ENCODE measurements at regions of chr5 and their contacts with region 1.

Region 1: GRCh38 chr5:177327539-177328522 is 16.1 kb upstream of the MXD3 start:
- DNase-seq: peak; percentile 68
- ATAC-seq: peak; percentile 78
- H3K4me3 ChIP-seq: no peak overlapping the region; a peak in 2 of 6 replicates
- H3K27ac ChIP-seq: peak overlapping the region; percentile 83
- H3K4me1 ChIP-seq: peaks cover 60% of the 10 kb centered on the region
- H3K27me3 ChIP-seq: no peaks in the 10 kb centered on the region
- CTCF ChIP-seq: peak; percentile 29; the same call in 1 of the 2 replicates
- EP300 ChIP-seq: no peak
- POLR2A ChIP-seq: no peak
- RAD21 ChIP-seq: no peak

Region 2: GRCh38 chr5:177351385-177352329 is 23.8 kb after region 1 on chr5 and contains the start of gene LMAN2:
- CTCF ChIA-PET with region 1: no interaction called
- POLR2A ChIA-PET with region 1: interaction called, 31 read pairs
- in situ Hi-C with region 1: no loop called
- intact Hi-C with region 1: no loop called
- DNase-seq: peak; percentile 91
- ATAC-seq: peak; percentile 97
- H3K4me3 ChIP-seq: peak within 1 kb of the TSS; percentile 92 to 98 (median 93)
- H3K27ac ChIP-seq: peak within 1 kb of the TSS; percentile 94
- H3K4me1 ChIP-seq: peaks cover 86% of the 10 kb centered on the region
- H3K27me3 ChIP-seq: no peaks in the 10 kb centered on the region; a peak in 1 of 5 replicates
- CTCF ChIP-seq: no peak
- EP300 ChIP-seq: no peak; a peak in 1 of 4 replicates
- POLR2A ChIP-seq: peak; percentile 68
- RAD21 ChIP-seq: peak; percentile 27; the same call in 1 of the 2 replicates
- total RNA-seq, gene LMAN2: 94.5 and 191 TPM in 2 replicates

Region 3: DNA sequence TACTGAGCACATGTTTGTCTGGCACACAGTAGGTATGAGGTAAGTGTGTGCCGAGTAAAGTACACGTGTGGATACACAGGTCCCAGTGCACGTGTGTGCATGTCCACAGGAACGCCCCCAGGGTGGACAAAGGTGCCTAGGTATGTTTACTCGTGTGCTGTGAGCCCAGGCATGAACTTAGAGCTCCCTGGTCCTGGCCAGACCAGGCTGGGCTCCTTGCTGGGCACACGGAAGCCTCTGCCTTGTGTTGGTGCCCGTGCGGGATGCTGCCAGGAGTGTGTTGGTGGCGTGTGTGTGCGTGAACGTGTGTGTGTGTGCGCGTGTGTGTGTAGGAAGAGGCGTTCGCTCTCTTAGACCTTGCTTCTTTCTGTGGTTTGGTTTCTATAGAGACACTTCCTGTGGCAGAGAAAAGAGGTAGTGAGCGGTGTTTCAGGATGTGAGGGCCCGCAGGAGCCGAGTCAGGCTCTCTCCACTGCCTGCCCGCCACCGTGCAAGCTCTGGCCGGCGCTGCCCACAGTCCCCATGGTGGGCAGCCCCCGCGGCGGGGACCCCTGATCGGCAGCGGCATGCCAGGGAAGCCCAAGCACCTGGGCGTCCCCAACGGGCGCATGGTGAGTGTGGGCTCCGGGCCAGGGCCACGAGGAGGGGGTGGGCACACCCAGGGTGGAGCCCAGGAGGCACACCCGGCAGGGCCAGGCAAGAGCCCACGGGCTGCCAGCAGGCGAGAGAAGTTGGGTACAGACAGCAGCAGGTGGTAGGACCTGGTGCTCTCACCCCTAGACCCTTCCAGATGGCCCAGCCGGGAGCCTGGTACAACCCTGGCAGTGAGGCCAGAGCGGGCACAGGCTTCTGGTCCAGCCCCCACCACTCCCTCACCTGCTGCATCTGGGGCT is 29.9 kb after region 1 on chr5 and contains the start of gene RGS14:
- CTCF ChIA-PET with region 1: no interaction called
- POLR2A ChIA-PET with region 1: interaction called, 31 read pairs
- in situ Hi-C with region 1: no loop called
- intact Hi-C with region 1: no loop called
- DNase-seq: no peak
- ATAC-seq: no peak
- H3K4me3 ChIP-seq: peak within 1 kb of the TSS in 1 of 3 experiments; percentile 25; a peak in 1 of 6 replicates
- H3K27ac ChIP-seq: no peak within 1 kb of the TSS
- H3K4me1 ChIP-seq: peaks cover 98% of the 10 kb centered on the region
- H3K27me3 ChIP-seq: peaks cover 0 to 23% of the 10 kb centered on the region in 2 experiments; a peak in 4 of 5 replicates
- CTCF ChIP-seq: no peak
- EP300 ChIP-seq: no peak
- POLR2A ChIP-seq: no peak
- RAD21 ChIP-seq: no peak
- total RNA-seq, gene RGS14: 10.7 and 11.1 TPM in 2 replicates

Region 4: DNA sequence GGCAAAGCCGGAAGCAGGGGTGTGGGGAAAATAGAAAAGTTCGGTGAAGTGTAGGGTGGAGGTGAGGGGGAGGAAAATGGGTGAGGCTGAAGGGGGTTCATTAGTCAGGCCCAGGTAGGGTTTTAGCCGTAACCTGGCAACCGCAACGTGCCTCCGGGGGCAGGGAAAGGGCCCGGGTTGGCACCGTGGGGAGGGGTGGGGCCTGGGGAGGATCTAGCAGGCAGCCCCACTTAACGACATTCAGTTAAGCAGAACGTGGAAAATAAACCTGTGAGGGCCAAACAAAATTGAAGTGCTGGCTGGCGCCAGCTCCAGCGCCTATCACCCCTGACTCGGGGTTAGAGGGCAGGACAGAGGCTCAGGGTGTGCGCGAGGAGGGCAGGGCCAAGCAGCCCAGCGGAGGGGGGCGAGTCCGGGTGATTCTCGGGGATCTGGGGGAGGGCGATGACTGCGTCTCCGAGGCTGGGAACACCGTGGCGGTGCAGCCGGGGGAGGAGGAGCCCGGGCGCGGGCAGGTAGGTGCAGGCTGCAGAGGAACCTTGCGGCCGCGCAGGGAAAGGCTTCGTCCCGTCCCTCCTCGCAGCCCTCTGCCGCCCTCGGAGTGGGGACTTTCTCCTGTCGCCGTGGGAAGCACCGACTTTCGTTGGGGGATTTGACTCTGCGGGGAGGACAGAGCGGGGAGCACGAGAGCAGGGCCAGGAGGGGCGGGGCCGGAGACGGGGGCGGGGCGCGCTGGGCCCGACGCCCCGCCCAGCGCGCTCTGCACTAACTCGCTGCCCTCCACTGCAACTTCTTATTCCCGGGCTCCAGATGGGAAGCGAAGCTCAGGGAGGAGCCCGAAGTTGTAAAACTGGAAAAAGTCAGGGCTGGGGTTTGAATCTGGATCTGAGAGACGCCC is 35.0 kb after region 1 on chr5:
- CTCF ChIA-PET with region 1: no interaction called
- POLR2A ChIA-PET with region 1: interaction called, 10 read pairs
- in situ Hi-C with region 1: no loop called
- intact Hi-C with region 1: no loop called
- DNase-seq: no peak
- ATAC-seq: peak; percentile 24
- H3K4me3 ChIP-seq: peak overlapping the region; percentile 57 to 81 (median 60)
- H3K27ac ChIP-seq: no peak overlapping the region
- H3K4me1 ChIP-seq: peaks cover 95% of the 10 kb centered on the region
- H3K27me3 ChIP-seq: peaks cover 0 to 23% of the 10 kb centered on the region in 2 experiments; a peak in 4 of 5 replicates
- CTCF ChIP-seq: peak; percentile 14; the same call in 1 of the 2 replicates
- EP300 ChIP-seq: no peak
- POLR2A ChIP-seq: no peak
- RAD21 ChIP-seq: no peak

Region 5: GRCh38 chr5:177370488-177371119 is 42.8 kb after region 1 on chr5:
- CTCF ChIA-PET with region 1: no interaction called
- POLR2A ChIA-PET with region 1: interaction called, 11 read pairs
- in situ Hi-C with region 1: no loop called
- intact Hi-C with region 1: no loop called
- DNase-seq: peak; percentile 94
- ATAC-seq: peak; percentile 82
- H3K4me3 ChIP-seq: peak overlapping the region in 2 of 3 experiments; percentile 74 to 92; a peak in 3 of 6 replicates
- H3K27ac ChIP-seq: peak overlapping the region; percentile 35
- H3K4me1 ChIP-seq: peaks cover 74% of the 10 kb centered on the region
- H3K27me3 ChIP-seq: no peaks in the 10 kb centered on the region; a peak in 1 of 5 replicates
- CTCF ChIP-seq: peak; percentile 92
- EP300 ChIP-seq: no peak
- POLR2A ChIP-seq: no peak
- RAD21 ChIP-seq: peak; percentile 95

Region 6: GRCh38 chr5:177446200-177447065 is 118.6 kb after region 1 on chr5 and contains the start of gene PRR7:
- CTCF ChIA-PET with region 1: no interaction called
- POLR2A ChIA-PET with region 1: no interaction called
- in situ Hi-C with region 1: no loop called
- intact Hi-C with region 1: loop called (anchors 5 kb)
- DNase-seq: no peak
- ATAC-seq: peak; percentile 27
- H3K4me3 ChIP-seq: peak within 1 kb of the TSS; percentile 55 to 80 (median 61)
- H3K27ac ChIP-seq: peak within 1 kb of the TSS; percentile 74
- H3K4me1 ChIP-seq: peaks cover 49% of the 10 kb centered on the region
- H3K27me3 ChIP-seq: no peaks in the 10 kb centered on the region
- CTCF ChIP-seq: peak; percentile 18
- EP300 ChIP-seq: no peak
- POLR2A ChIP-seq: peak in 1 of 2 experiments; percentile 41; a peak in 1 of 4 replicates
- RAD21 ChIP-seq: peak; percentile 65
- total RNA-seq, gene PRR7: 3.9 and 5.0 TPM in 2 replicates